ENCODE measurements at regions of chr4 and their contacts with region 1.

Region 1: DNA sequence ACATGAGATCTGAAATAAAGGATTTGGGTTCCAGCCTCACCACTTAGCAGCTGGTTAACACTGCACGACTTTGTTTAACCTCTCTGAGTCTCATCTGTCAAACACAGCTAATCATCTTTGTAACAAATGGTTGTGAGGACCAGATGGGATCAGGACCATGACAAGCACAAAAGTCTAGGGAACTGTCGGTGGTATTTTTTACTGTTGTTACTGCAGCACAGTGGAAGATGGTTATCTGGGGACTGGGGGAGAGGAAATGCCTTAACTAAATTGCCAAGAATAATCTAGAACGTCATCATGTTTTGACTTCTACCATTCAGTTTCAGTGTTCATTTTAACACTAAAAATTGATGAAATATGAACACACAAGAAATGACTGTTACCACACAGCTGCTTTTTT is 99.5 kb downstream of the ADGRA3 start:
- DNase-seq: no peak
- H3K4me3 ChIP-seq: no peak overlapping the region
- H3K27ac ChIP-seq: no peak overlapping the region
- H3K4me1 ChIP-seq: no peaks in the 10 kb centered on the region
- H3K27me3 ChIP-seq: no peaks in the 10 kb centered on the region
- CTCF ChIP-seq: no peak
- EP300 ChIP-seq: no peak
- POLR2A ChIP-seq: no peak

Region 2: GRCh38 chr4:22593933-22594332 is 177.5 kb after region 1 on chr4:
- in situ Hi-C with region 1: no loop called
- intact Hi-C with region 1: no loop called
- DNase-seq: no peak
- H3K4me3 ChIP-seq: no peak overlapping the region
- H3K27ac ChIP-seq: no peak overlapping the region
- H3K4me1 ChIP-seq: no peaks in the 10 kb centered on the region
- H3K27me3 ChIP-seq: no peaks in the 10 kb centered on the region
- CTCF ChIP-seq: no peak
- EP300 ChIP-seq: no peak
- POLR2A ChIP-seq: no peak

Region 3: DNA sequence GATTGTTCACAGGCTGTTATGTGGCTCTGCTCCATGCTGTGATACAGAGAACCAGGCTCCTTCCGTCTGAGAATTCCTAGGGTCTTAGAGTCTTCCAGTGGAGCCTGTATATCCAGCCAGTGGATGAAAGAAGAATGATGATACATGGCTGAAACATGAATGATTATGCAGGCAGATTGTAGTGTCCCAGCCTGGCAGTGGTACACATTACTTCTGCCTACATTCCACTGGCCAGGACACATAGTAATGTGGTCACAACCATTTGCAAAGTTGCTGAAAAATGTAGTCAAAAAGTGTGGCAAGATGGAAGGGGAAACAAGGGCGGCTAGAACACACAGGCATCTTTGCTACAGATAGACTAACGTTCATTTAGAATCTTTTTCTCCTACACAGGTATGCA is 271.8 kb after region 1 on chr4:
- in situ Hi-C with region 1: loop called in 2 of 4 experiments (anchors 5 to 25 kb)
- intact Hi-C with region 1: loop called (anchors 5 kb)
- DNase-seq: no peak
- H3K4me3 ChIP-seq: no peak overlapping the region
- H3K27ac ChIP-seq: no peak overlapping the region
- H3K4me1 ChIP-seq: peaks cover 0 to 13% (median 5%) of the 10 kb centered on the region in 4 donors
- H3K27me3 ChIP-seq: no peaks in the 10 kb centered on the region
- CTCF ChIP-seq: no peak
- EP300 ChIP-seq: no peak
- POLR2A ChIP-seq: no peak

Measured in transverse colon (tissue), 4 donors.